Ovary (tissue), 10 donors: ENCODE measurements at regions of chr18 and their contacts with region 1.

Region 1: DNA sequence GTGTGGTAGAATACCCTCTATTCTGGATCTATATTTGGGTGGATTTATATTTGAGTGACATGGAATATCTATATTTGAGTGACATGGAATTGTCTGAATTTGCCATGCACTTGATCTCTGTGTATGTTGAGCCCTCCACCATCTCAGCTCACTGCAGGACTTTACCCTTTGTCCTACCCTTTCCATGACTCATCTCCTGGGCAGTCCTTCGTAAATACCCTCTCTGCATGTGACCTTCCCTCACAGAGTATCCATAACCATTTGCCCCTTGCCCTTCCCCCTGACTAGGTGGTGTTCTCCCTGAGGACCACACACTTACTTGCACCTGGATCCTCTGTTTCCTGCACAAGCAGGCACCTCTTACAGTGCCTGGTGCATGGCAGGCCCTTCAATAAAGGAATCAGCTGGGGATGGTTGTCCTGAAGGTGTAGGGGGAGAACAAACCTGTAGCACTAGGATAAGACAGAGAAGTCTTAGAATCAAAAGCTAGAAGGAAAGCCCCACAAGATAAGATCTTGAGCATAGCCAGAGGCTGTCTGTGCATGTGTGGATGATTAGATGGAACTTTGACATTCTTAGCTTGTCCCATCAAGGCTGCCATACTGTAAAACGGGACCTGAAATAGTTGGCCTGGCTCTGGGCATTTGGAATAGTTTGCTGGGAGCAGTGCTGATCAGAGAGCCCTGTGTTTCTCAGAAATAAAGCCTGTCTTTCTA is 230.4 kb downstream of the FHOD3 start:
- DNase-seq: no peak
- H3K4me3 ChIP-seq: no peak overlapping the region
- H3K27ac ChIP-seq: no peak overlapping the region
- H3K4me1 ChIP-seq: no peaks in the 10 kb centered on the region
- H3K27me3 ChIP-seq: no peaks in the 10 kb centered on the region
- CTCF ChIP-seq: no peak
- EP300 ChIP-seq: no peak
- POLR2A ChIP-seq: no peak

Region 2: GRCh38 chr18:36366994-36367839 is 160.7 kb before region 1 on chr18:
- intact Hi-C with region 1: loop called in 1 of 4 experiments (anchors 5 kb)
- DNase-seq: peak in 3 of 5 donors; percentile 27 to 60 (median 49)
- H3K4me3 ChIP-seq: no peak overlapping the region
- H3K27ac ChIP-seq: peak overlapping the region in 1 of 2 donors; percentile 13
- H3K4me1 ChIP-seq: peaks cover 9% of the 10 kb centered on the region
- H3K27me3 ChIP-seq: no peaks in the 10 kb centered on the region
- CTCF ChIP-seq: no peak
- EP300 ChIP-seq: no peak
- POLR2A ChIP-seq: no peak